Naive thymus-derived CD4-positive, alpha-beta T cell (primary cell): ENCODE measurements at regions of chr1 and their contacts with region 1.

Region 1: DNA sequence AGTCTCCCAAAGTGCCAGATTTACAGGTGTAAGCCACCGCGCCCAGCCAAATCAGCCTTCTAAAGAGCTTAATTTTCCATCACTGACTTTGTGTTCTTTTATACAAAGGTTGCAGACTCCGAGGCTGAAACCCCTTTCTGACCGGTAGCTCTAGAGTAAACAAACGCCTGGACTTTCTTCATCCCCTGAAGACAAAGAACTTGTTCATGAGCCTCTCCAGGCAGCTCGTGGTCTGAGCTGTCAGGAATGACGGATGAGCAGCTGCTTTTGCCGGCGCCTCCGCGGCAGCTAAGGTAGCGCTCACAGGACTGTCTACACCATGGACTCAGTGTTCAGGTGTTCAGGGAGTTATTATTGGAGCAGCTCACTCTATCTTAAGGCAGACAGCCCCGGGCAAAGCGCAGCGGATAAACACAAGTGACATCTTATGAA is 128.5 kb upstream of the ERRFI1 start:
- DNase-seq: no peak
- ATAC-seq: no peak
- H3K4me3 ChIP-seq: no peak overlapping the region
- H3K4me3 Mint-ChIP-seq: peak overlapping the region in 6 of 10 donors; percentile 9 to 80 (median 34)
- H3K27ac ChIP-seq: no peak overlapping the region
- H3K27ac Mint-ChIP-seq: peak overlapping the region in 5 of 9 donors; percentile 25 to 99 (median 63)
- H3K4me1 ChIP-seq: peaks cover 30 to 37% of the 10 kb centered on the region in 2 donors
- H3K4me1 Mint-ChIP-seq: peaks cover 36 to 55% (median 53%) of the 10 kb centered on the region in 7 donors
- H3K27me3 ChIP-seq: no peaks in the 10 kb centered on the region
- H3K27me3 Mint-ChIP-seq: peaks cover 0 to 36% (median 13%) of the 10 kb centered on the region in 5 donors

Region 2: GRCh38 chr1:6423321-6423999 is 1731.2 kb before region 1 on chr1:
- CTCF ChIA-PET with region 1: no interaction called
- POLR2A ChIA-PET with region 1: no interaction called
- intact Hi-C with region 1: no loop called
- DNase-seq: peak; percentile 45 to 75 (median 66)
- ATAC-seq: peak; percentile 84
- H3K4me3 ChIP-seq: peak overlapping the region; percentile 15
- H3K4me3 Mint-ChIP-seq: peak overlapping the region; percentile 54 to 83 (median 72)
- H3K27ac ChIP-seq: no peak overlapping the region
- H3K27ac Mint-ChIP-seq: no peak overlapping the region
- H3K4me1 ChIP-seq: peaks cover 13 to 31% of the 10 kb centered on the region in 2 donors
- H3K4me1 Mint-ChIP-seq: peaks cover 0 to 14% (median 11%) of the 10 kb centered on the region in 7 donors
- H3K27me3 ChIP-seq: peaks cover 0 to 8% of the 10 kb centered on the region in 2 donors
- H3K27me3 Mint-ChIP-seq: peaks cover 18 to 60% (median 26%) of the 10 kb centered on the region in 5 donors

Region 3: GRCh38 chr1:8097077-8097799 is 57.4 kb before region 1 on chr1:
- CTCF ChIA-PET with region 1: no interaction called
- POLR2A ChIA-PET with region 1: no interaction called
- intact Hi-C with region 1: loop called in 1 of 2 experiments (anchors 2 kb)
- DNase-seq: no peak
- ATAC-seq: peak; percentile 69
- H3K4me3 ChIP-seq: no peak overlapping the region
- H3K4me3 Mint-ChIP-seq: peak overlapping the region in 1 of 10 donors; percentile 53
- H3K27ac ChIP-seq: no peak overlapping the region
- H3K27ac Mint-ChIP-seq: peak overlapping the region in 1 of 9 donors; percentile 84
- H3K4me1 ChIP-seq: no peaks in the 10 kb centered on the region
- H3K4me1 Mint-ChIP-seq: peaks cover 0 to 24% (median 6%) of the 10 kb centered on the region in 7 donors
- H3K27me3 ChIP-seq: no peaks in the 10 kb centered on the region
- H3K27me3 Mint-ChIP-seq: peaks cover 0 to 5% (median 4%) of the 10 kb centered on the region in 5 donors

Region 4: DNA sequence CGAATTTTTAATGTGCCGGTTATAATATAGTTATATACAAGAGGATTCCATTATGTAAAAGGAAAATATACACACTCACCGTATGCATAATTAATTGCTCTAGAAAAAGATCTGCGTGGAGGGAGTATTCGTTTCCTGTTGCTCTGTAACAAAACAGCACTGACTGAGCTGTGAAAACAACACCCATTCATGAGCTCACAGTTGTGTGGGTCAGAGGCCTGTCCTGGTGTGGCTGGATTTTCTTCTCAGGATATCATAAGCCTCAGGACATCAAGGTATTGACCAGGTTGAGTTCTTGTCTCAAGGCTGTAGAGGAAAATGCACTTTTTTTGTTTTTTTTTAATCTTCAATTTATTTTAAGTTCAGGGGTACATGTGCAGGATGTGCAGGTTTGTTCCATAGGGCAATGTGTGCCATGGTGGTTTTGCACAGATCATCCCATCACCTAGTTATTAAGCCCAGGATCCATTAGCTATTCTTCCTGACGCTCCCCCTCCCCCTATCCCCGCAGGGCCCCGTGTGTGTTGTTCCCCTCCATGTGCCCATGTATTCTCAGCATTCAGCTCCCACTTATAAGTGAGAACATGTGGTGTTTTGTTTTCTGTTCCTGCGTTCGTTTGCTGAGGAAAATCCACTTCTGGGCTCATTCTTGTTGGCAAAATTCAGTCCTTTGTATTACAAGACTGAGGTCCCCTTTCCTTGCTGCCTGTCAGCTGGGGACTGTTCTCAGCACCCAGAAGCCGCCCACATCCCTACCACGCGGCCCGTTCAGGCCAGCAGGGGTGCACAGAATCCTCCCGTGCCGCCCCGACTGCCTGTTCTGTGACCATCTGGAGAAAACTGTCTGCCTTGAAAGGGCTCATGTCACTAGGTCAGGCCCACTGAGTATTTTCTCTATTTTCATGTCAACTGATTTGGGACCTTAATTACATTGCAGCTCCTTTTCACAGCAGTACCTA is 41.1 kb before region 1 on chr1:
- CTCF ChIA-PET with region 1: no interaction called
- POLR2A ChIA-PET with region 1: no interaction called
- intact Hi-C with region 1: loop called in 1 of 2 experiments (anchors 5 kb)
- DNase-seq: no peak
- ATAC-seq: peak; percentile 56
- H3K4me3 ChIP-seq: no peak overlapping the region
- H3K4me3 Mint-ChIP-seq: peak overlapping the region in 1 of 10 donors; percentile 20
- H3K27ac ChIP-seq: no peak overlapping the region
- H3K27ac Mint-ChIP-seq: peak overlapping the region in 1 of 9 donors; percentile 63
- H3K4me1 ChIP-seq: peaks cover 0 to 5% of the 10 kb centered on the region in 2 donors
- H3K4me1 Mint-ChIP-seq: peaks cover 0 to 14% (median 8%) of the 10 kb centered on the region in 7 donors
- H3K27me3 ChIP-seq: no peaks in the 10 kb centered on the region
- H3K27me3 Mint-ChIP-seq: peaks cover 0 to 9% (median 0%) of the 10 kb centered on the region in 5 donors

Region 5: GRCh38 chr1:8169364-8170058 is 14.9 kb after region 1 on chr1:
- CTCF ChIA-PET with region 1: interaction called, 6 read pairs
- POLR2A ChIA-PET with region 1: interaction called, 60 read pairs
- intact Hi-C with region 1: loop called (anchors 1 kb)
- DNase-seq: peak in 7 of 9 donors; percentile 55 to 81 (median 72)
- ATAC-seq: peak; percentile 92
- H3K4me3 ChIP-seq: peak overlapping the region; percentile 26
- H3K4me3 Mint-ChIP-seq: peak overlapping the region; percentile 17 to 78 (median 69)
- H3K27ac ChIP-seq: peak overlapping the region; percentile 55
- H3K27ac Mint-ChIP-seq: peak overlapping the region; percentile 91 to 98 (median 97)
- H3K4me1 ChIP-seq: peaks cover 19 to 36% of the 10 kb centered on the region in 2 donors
- H3K4me1 Mint-ChIP-seq: peaks cover 16 to 59% (median 34%) of the 10 kb centered on the region in 7 donors
- H3K27me3 ChIP-seq: no peaks in the 10 kb centered on the region
- H3K27me3 Mint-ChIP-seq: no peaks in the 10 kb centered on the region

Region 6: GRCh38 chr1:8182034-8182761 is 27.6 kb after region 1 on chr1:
- CTCF ChIA-PET with region 1: no interaction called
- POLR2A ChIA-PET with region 1: no interaction called
- intact Hi-C with region 1: loop called (anchors 1 kb)
- DNase-seq: peak in 7 of 9 donors; percentile 29 to 78 (median 64)
- ATAC-seq: peak; percentile 90
- H3K4me3 ChIP-seq: peak overlapping the region; percentile 21
- H3K4me3 Mint-ChIP-seq: peak overlapping the region in 9 of 10 donors; percentile 36 to 76 (median 58)
- H3K27ac ChIP-seq: no peak overlapping the region
- H3K27ac Mint-ChIP-seq: peak overlapping the region; percentile 46 to 93 (median 80)
- H3K4me1 ChIP-seq: peaks cover 12 to 16% of the 10 kb centered on the region in 2 donors
- H3K4me1 Mint-ChIP-seq: peaks cover 0 to 21% (median 19%) of the 10 kb centered on the region in 7 donors
- H3K27me3 ChIP-seq: no peaks in the 10 kb centered on the region
- H3K27me3 Mint-ChIP-seq: peaks cover 0 to 3% (median 0%) of the 10 kb centered on the region in 5 donors

Region 7: GRCh38 chr1:8314346-8315280 is 160.0 kb after region 1 on chr1:
- CTCF ChIA-PET with region 1: interaction called, 3 read pairs
- POLR2A ChIA-PET with region 1: no interaction called
- intact Hi-C with region 1: loop called (anchors 5 kb)
- DNase-seq: peak in 8 of 9 donors; percentile 14 to 56 (median 46)
- ATAC-seq: peak; percentile 56
- H3K4me3 ChIP-seq: no peak overlapping the region
- H3K4me3 Mint-ChIP-seq: peak overlapping the region in 5 of 10 donors; percentile 9 to 48 (median 32)
- H3K27ac ChIP-seq: no peak overlapping the region
- H3K27ac Mint-ChIP-seq: no peak overlapping the region
- H3K4me1 ChIP-seq: peaks cover 4 to 11% of the 10 kb centered on the region in 2 donors
- H3K4me1 Mint-ChIP-seq: peaks cover 6 to 26% (median 23%) of the 10 kb centered on the region in 7 donors
- H3K27me3 ChIP-seq: peaks cover 5 to 8% of the 10 kb centered on the region in 2 donors
- H3K27me3 Mint-ChIP-seq: peaks cover 7 to 51% (median 33%) of the 10 kb centered on the region in 5 donors

Region 8: GRCh38 chr1:8702850-8703810 is 548.5 kb after region 1 on chr1:
- CTCF ChIA-PET with region 1: no interaction called
- POLR2A ChIA-PET with region 1: no interaction called
- intact Hi-C with region 1: loop called in 1 of 2 experiments (anchors 5 kb)
- DNase-seq: peak in 7 of 9 donors; percentile 22 to 83 (median 40)
- ATAC-seq: peak; percentile 72
- H3K4me3 ChIP-seq: peak overlapping the region; percentile 28
- H3K4me3 Mint-ChIP-seq: peak overlapping the region; percentile 79 to 92 (median 86)
- H3K27ac ChIP-seq: no peak overlapping the region
- H3K27ac Mint-ChIP-seq: peak overlapping the region in 6 of 9 donors; percentile 8 to 89 (median 48)
- H3K4me1 ChIP-seq: peaks cover 19 to 23% of the 10 kb centered on the region in 2 donors
- H3K4me1 Mint-ChIP-seq: peaks cover 19 to 53% (median 30%) of the 10 kb centered on the region in 7 donors
- H3K27me3 ChIP-seq: peaks cover 3 to 27% of the 10 kb centered on the region in 2 donors
- H3K27me3 Mint-ChIP-seq: peaks cover 9 to 56% (median 54%) of the 10 kb centered on the region in 5 donors